ENCODE measurements at regions of chr2 and their contacts with region 1.

Region 1: GRCh38 chr2:171136024-171136423 is 24.7 kb downstream of the TLK1 start:
- DNase-seq: no peak
- ATAC-seq: no peak
- H3K4me3 ChIP-seq: no peak overlapping the region
- H3K27ac ChIP-seq: peak overlapping the region; percentile 74; the same call in 2 of the 3 replicates
- H3K4me1 ChIP-seq: peaks cover 8 to 41% of the 10 kb centered on the region in 2 experiments; a peak in 4 of 5 replicates
- H3K27me3 ChIP-seq: no peaks in the 10 kb centered on the region
- CTCF ChIP-seq: no peak
- EP300 ChIP-seq: no peak
- POLR2A ChIP-seq: no peak
- RAD21 ChIP-seq: no peak

Region 2: DNA sequence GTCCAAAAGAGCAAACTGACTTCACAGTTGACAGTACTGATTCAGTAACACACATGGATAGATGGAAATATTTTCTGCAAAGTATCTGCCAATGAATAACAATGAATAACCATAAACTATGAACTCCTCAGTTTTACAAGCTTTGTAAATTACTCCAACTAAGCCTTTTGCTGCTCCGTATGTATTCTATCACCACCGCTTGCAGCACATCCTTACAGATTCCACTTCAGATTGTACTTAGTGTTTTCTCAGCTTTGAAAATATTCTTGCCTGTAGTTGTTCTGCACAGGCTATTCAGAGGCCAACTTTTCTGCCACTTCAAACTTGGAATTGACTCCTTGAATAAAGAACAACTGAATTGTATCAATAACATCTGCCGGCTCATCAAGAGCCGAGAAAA is 11.5 kb before region 1 on chr2:
- CTCF ChIA-PET with region 1: no interaction called
- POLR2A ChIA-PET with region 1: interaction called, 15 read pairs
- in situ Hi-C with region 1: no loop called
- intact Hi-C with region 1: no loop called
- DNase-seq: no peak
- ATAC-seq: no peak
- H3K4me3 ChIP-seq: no peak overlapping the region
- H3K27ac ChIP-seq: no peak overlapping the region
- H3K4me1 ChIP-seq: no peaks in the 10 kb centered on the region
- H3K27me3 ChIP-seq: no peaks in the 10 kb centered on the region
- CTCF ChIP-seq: no peak
- EP300 ChIP-seq: no peak
- POLR2A ChIP-seq: no peak
- RAD21 ChIP-seq: no peak

Region 3: GRCh38 chr2:171146633-171147032 is 10.6 kb after region 1 on chr2:
- CTCF ChIA-PET with region 1: no interaction called
- POLR2A ChIA-PET with region 1: interaction called, 34 read pairs
- in situ Hi-C with region 1: no loop called
- intact Hi-C with region 1: no loop called
- DNase-seq: no peak
- ATAC-seq: peak; percentile 8
- H3K4me3 ChIP-seq: no peak overlapping the region
- H3K27ac ChIP-seq: peak overlapping the region; percentile 47; the same call in 2 of the 3 replicates
- H3K4me1 ChIP-seq: peaks cover 9 to 25% of the 10 kb centered on the region in 2 experiments; a peak in 4 of 5 replicates
- H3K27me3 ChIP-seq: no peaks in the 10 kb centered on the region
- CTCF ChIP-seq: no peak
- EP300 ChIP-seq: no peak
- POLR2A ChIP-seq: no peak
- RAD21 ChIP-seq: no peak